BJ (cell line): ENCODE measurements at regions of chr4 and their contacts with region 1.

Region 1: GRCh38 chr4:143482840-143483239 is 30.7 kb upstream of the SMARCA5 start:
- DNase-seq: no peak
- H3K4me3 ChIP-seq: no peak overlapping the region
- H3K27me3 ChIP-seq: no peaks in the 10 kb centered on the region
- CTCF ChIP-seq: peak; percentile 62

Region 2: GRCh38 chr4:143202824-143203223 is 280.0 kb before region 1 on chr4:
- CTCF ChIA-PET with region 1: interaction called, 16 read pairs
- POLR2A ChIA-PET with region 1: no interaction called
- DNase-seq: no peak
- H3K4me3 ChIP-seq: no peak overlapping the region
- H3K27me3 ChIP-seq: no peaks in the 10 kb centered on the region
- CTCF ChIP-seq: peak; percentile 21; the same call in 1 of the 2 replicates

Region 3: GRCh38 chr4:143498021-143498420 is 15.2 kb after region 1 on chr4:
- CTCF ChIA-PET with region 1: no interaction called
- POLR2A ChIA-PET with region 1: no interaction called
- DNase-seq: no peak
- H3K4me3 ChIP-seq: no peak overlapping the region
- H3K27me3 ChIP-seq: no peaks in the 10 kb centered on the region; the same call in 1 of the 2 replicates
- CTCF ChIP-seq: no peak